Left lung (tissue), 14 donors: ENCODE measurements at regions of chr12 and their contacts with region 1.

Region 1: GRCh38 chr12:118376089-118377020 is at the start of gene SUDS3:
- DNase-seq: peak; percentile 92 to 97 (median 94)
- ATAC-seq: peak; percentile 70
- H3K4me3 ChIP-seq: peak within 1 kb of the TSS; percentile 97 to 98
- H3K27ac ChIP-seq: peak within 1 kb of the TSS; percentile 89 to 90
- H3K4me1 ChIP-seq: peaks cover 4 to 45% of the 10 kb centered on the region in 2 donors
- H3K27me3 ChIP-seq: no peaks in the 10 kb centered on the region
- CTCF ChIP-seq: peak; percentile 95 to 97
- polyA plus RNA-seq, gene SUDS3: 46.3 to 60.8 (median 52.2) TPM

Region 2: DNA sequence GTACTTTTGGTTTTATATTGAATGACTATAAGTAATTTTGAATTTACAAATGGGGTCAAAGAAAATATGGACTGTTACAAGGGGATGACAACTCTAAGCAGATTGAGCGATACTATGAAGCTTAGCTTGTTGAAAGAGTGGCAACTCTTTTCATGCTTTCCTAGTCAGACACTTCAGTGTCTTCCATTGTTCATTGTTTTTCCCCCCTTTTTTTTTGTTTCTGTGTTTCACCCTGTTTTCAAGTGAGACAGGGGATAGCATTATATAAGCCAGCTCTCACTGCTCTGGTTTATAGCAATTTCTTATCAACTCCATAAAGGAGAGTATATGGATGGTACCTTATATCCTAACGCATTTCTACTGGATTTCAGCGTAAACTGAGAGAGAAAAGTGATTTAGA is 215.8 kb before region 1 on chr12:
- intact Hi-C with region 1: no loop called
- DNase-seq: no peak
- ATAC-seq: no peak
- H3K4me3 ChIP-seq: no peak overlapping the region
- H3K27ac ChIP-seq: no peak overlapping the region
- H3K4me1 ChIP-seq: no peaks in the 10 kb centered on the region
- H3K27me3 ChIP-seq: no peaks in the 10 kb centered on the region
- CTCF ChIP-seq: no peak

Region 3: DNA sequence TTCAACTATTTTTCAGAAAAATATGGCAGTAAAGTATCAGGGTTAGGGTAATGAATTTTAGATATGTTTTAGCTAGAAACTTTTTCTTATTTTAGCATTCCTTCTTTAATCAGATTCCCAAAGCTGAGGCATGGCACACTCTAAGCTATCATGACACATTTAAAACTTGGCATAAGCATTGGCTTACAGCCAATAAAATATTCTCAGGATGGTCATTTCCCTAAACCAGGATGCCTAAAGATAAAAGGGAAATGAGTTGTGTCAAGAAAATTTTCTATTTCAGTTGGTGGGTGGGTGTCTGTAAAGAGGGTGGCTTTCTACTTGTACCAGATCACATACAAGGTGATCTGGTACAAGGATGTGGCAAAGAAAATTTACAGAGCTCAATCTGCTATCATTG is 192.7 kb before region 1 on chr12:
- intact Hi-C with region 1: loop called in 1 of 2 experiments (anchors 5 kb)
- DNase-seq: no peak
- ATAC-seq: no peak
- H3K4me3 ChIP-seq: no peak overlapping the region
- H3K27ac ChIP-seq: no peak overlapping the region
- H3K4me1 ChIP-seq: peaks cover 0 to 13% of the 10 kb centered on the region in 2 donors
- H3K27me3 ChIP-seq: no peaks in the 10 kb centered on the region
- CTCF ChIP-seq: no peak

Region 4: DNA sequence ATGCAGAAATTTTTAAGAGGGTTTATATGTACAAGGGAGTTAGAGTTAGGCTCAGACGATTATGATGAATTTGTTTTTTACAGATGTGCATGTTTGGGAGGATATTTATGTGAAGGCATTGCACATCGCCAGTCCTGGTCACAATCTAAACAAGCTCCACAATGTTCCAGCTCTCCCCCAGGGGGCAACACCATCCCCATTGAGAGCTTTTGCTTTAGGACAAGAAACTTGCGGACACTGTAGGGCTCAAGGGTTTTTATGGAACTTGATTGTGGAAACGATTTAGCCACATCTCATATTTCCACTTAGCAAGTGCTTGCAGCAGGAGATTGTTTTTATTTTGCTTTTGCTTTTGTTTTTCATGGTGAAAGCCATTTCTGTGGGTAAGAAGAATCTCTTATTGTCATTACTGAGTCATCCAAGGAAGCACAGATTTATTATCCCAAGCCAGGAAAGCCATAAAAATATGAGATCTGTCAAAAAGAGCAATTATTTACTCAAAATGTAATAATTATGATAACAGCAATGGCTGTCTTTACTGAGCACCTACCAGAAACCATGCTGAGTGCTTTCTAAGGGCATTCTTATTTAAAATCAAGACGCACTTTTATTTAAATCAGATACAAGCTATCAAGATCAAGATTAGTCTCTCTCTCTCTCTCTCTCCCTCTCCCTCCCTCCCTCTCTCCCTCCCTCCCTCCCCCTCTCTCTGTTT is 328.3 kb after region 1 on chr12:
- intact Hi-C with region 1: no loop called
- DNase-seq: no peak
- ATAC-seq: no peak
- H3K4me3 ChIP-seq: no peak overlapping the region
- H3K27ac ChIP-seq: no peak overlapping the region
- H3K4me1 ChIP-seq: no peaks in the 10 kb centered on the region
- H3K27me3 ChIP-seq: no peaks in the 10 kb centered on the region
- CTCF ChIP-seq: no peak